B cell (primary cell): ENCODE measurements at regions of chr11 and their contacts with region 1.

Region 1: DNA sequence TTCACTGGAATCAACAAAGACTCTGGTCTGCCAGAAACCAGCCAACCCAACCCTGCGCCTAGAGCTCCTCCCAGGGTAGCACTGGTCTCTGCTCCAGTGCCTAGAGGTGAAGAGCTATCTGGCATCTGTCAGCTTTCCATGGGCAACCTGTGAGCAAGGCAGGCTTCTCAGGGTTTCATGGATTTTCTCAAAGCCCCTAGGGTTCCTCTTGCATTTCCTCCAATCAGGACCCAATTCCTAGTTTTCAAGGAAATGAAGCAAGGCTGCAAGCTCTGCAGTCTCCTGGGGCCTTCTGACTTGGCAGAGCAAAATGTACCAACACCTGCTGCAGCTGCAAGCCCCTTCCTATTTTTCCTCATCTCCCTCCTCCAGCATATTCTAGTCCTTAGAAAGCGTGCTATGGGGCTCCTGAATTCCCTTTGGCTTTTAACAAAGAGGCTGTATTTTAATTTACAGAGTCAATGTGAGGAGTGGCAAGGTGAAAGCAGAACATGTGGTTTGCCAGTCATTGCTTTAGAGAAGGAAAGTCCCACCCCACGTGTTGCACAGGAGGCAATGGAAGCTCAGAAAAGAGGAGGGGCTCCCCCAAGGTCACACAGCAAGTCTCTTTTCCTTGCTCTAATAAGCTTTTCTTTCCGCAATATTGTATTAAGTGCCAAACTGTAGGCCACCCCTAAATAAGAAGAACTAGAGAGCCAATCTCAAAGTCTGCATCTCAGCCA is 33.0 kb upstream of the RIC3 start:
- DNase-seq: peak; percentile 90
- ATAC-seq: peak; percentile 87
- H3K4me3 ChIP-seq: peak overlapping the region in 1 of 5 experiments; percentile 15
- H3K4me3 Mint-ChIP-seq: peak overlapping the region; percentile 65
- H3K27ac ChIP-seq: peak overlapping the region; percentile 65 to 82
- H3K27ac Mint-ChIP-seq: peak overlapping the region; percentile 87
- H3K4me1 ChIP-seq: peaks cover 62 to 64% of the 10 kb centered on the region in 2 donors
- H3K4me1 Mint-ChIP-seq: peaks cover 63% of the 10 kb centered on the region
- H3K27me3 ChIP-seq: no peaks in the 10 kb centered on the region
- H3K27me3 Mint-ChIP-seq: no peaks in the 10 kb centered on the region
- CTCF ChIP-seq: no peak

Region 2: GRCh38 chr11:7787239-7787638 is 414.6 kb before region 1 on chr11:
- CTCF ChIA-PET with region 1: no interaction called
- POLR2A ChIA-PET with region 1: no interaction called
- intact Hi-C with region 1: no loop called
- DNase-seq: no peak
- ATAC-seq: no peak
- H3K4me3 ChIP-seq: no peak overlapping the region
- H3K4me3 Mint-ChIP-seq: no peak overlapping the region
- H3K27ac ChIP-seq: no peak overlapping the region
- H3K27ac Mint-ChIP-seq: no peak overlapping the region
- H3K4me1 ChIP-seq: no peaks in the 10 kb centered on the region
- H3K4me1 Mint-ChIP-seq: no peaks in the 10 kb centered on the region
- H3K27me3 ChIP-seq: no peaks in the 10 kb centered on the region
- H3K27me3 Mint-ChIP-seq: peaks cover 7% of the 10 kb centered on the region
- CTCF ChIP-seq: no peak

Region 3: DNA sequence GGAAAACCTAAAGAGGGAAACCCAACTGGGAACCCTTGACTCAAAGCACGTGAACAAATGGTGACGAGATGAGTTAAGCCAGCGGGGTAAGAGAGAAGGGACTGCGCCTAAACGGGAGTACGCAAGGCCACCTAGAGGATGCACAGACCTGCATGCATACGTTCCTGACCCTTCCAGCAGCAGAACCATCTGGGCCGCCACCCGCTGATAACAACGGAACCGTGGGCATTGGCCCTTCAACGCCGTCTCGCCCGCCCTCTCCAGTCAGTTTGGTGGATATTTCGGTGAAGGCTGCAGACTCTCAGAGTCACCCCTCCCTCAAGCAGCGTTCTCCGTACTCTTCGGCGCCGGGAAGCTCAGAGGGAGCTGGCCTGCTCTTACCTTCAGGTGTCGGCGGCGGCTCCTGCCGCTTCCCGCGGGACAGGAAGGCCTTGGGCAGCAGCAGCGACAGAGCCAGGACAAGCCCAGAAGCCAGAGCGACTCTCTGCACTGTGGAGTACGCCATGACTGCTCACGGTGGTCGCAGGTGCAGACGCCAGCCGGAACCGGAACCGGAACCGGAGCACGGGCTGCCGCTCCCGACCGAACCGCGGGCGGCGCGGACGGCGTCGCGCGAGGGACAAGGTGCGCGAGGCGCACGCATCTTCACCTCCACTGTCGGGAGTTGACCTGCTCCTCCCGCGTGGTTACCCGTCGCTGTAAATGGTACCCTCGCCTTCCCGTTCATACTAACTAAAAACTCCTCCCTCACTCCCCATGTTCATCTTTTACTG is 33.1 kb before region 1 on chr11 and contains the start of gene RIC3:
- CTCF ChIA-PET with region 1: no interaction called
- POLR2A ChIA-PET with region 1: no interaction called
- intact Hi-C with region 1: loop called (anchors 1 kb)
- DNase-seq: peak; percentile 83
- ATAC-seq: peak; percentile 92
- H3K4me3 ChIP-seq: peak within 1 kb of the TSS; percentile 44 to 89 (median 81)
- H3K4me3 Mint-ChIP-seq: peak within 1 kb of the TSS; percentile 89
- H3K27ac ChIP-seq: peak within 1 kb of the TSS in 1 of 2 donors; percentile 6
- H3K27ac Mint-ChIP-seq: peak within 1 kb of the TSS; percentile 79
- H3K4me1 ChIP-seq: peaks cover 15 to 16% of the 10 kb centered on the region in 2 donors
- H3K4me1 Mint-ChIP-seq: peaks cover 35% of the 10 kb centered on the region
- H3K27me3 ChIP-seq: peaks cover 0 to 19% (median 9%) of the 10 kb centered on the region in 4 experiments
- H3K27me3 Mint-ChIP-seq: peaks cover 22% of the 10 kb centered on the region
- CTCF ChIP-seq: no peak
- total RNA-seq, gene RIC3: 73.0 and 74.6 TPM in 2 replicates

Region 4: DNA sequence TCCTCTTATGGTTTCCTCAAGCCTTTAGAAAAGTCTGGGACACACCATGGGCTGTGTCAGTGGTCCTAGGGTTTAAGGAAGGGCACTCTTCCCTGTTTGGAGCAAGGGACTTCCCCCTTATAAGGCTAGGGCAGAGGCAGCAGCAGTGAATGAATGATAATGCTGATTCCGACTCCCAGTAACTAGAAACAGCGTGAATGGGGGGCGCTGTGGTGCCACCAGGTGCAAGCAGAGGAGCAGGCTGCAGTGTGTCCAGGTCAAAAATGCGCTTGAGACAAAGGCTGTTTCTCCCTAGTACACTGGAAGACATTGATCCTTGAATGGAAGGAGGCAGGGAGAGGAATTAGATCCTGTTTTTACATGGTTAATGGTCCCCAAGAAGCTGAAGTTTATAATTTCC is 21.3 kb before region 1 on chr11:
- CTCF ChIA-PET with region 1: no interaction called
- POLR2A ChIA-PET with region 1: no interaction called
- intact Hi-C with region 1: no loop called
- DNase-seq: no peak
- ATAC-seq: no peak
- H3K4me3 ChIP-seq: no peak overlapping the region
- H3K4me3 Mint-ChIP-seq: no peak overlapping the region
- H3K27ac ChIP-seq: no peak overlapping the region
- H3K27ac Mint-ChIP-seq: no peak overlapping the region
- H3K4me1 ChIP-seq: no peaks in the 10 kb centered on the region
- H3K4me1 Mint-ChIP-seq: no peaks in the 10 kb centered on the region
- H3K27me3 ChIP-seq: peaks cover 0 to 11% (median 0%) of the 10 kb centered on the region in 4 experiments
- H3K27me3 Mint-ChIP-seq: peaks cover 47% of the 10 kb centered on the region
- CTCF ChIP-seq: no peak

Region 5: DNA sequence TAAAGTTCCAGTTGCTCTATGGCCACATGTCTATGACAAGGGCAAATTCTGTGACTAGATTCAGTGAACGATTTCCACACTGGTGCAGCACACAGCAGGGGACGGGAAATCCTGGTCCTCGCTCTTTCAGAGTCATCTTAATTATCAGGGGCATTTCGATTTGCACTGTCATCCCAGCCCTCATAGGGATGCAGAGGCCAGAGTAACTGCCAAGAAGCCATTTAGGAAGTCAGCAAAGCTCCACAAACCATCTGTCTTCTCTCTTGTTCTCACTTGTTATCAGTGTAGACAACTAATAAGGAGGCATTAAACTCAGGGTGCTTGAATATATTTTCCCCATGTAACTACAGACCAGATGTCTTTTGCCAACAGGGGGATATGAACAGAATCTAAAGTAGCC is 240.5 kb after region 1 on chr11:
- CTCF ChIA-PET with region 1: no interaction called
- POLR2A ChIA-PET with region 1: no interaction called
- intact Hi-C with region 1: no loop called
- DNase-seq: no peak
- ATAC-seq: no peak
- H3K4me3 ChIP-seq: no peak overlapping the region
- H3K4me3 Mint-ChIP-seq: no peak overlapping the region
- H3K27ac ChIP-seq: no peak overlapping the region
- H3K27ac Mint-ChIP-seq: no peak overlapping the region
- H3K4me1 ChIP-seq: no peaks in the 10 kb centered on the region
- H3K4me1 Mint-ChIP-seq: no peaks in the 10 kb centered on the region
- H3K27me3 ChIP-seq: no peaks in the 10 kb centered on the region
- H3K27me3 Mint-ChIP-seq: no peaks in the 10 kb centered on the region
- CTCF ChIP-seq: no peak